HCT116 (cell line): ENCODE measurements at regions of chr12 and their contacts with region 1.

Region 1: GRCh38 chr12:73699318-73699717 is 838.3 kb upstream of the ATXN7L3B start:
- DNase-seq: no peak
- ATAC-seq: no peak
- H3K4me3 ChIP-seq: no peak overlapping the region
- H3K27ac ChIP-seq: no peak overlapping the region
- H3K4me1 ChIP-seq: no peaks in the 10 kb centered on the region
- H3K27me3 ChIP-seq: no peaks in the 10 kb centered on the region
- CTCF ChIP-seq: no peak
- POLR2A ChIP-seq: no peak
- RAD21 ChIP-seq: no peak

Region 2: DNA sequence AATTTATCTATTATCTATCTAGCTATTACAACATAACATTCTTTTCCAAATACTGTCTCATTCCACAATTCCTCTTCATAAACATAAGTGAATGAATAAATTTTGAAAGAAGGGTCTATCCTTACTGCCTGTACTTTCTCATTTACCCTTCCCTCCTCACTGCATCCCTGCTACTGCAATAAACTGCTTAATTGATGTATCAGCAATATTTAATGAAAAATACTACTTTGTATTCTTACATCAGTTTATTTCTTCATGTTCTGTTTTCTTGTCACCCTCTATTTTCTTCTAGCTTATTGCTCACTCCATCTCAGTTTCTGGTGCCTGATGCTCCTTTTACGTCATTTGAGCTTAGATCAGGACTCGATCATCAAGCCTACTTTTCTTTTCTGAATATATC is 142.6 kb after region 1 on chr12:
- CTCF ChIA-PET with region 1: no interaction called
- POLR2A ChIA-PET with region 1: no interaction called
- RAD21 ChIA-PET with region 1: no interaction called
- intact Hi-C with region 1: no loop called
- DNase-seq: no peak
- ATAC-seq: no peak
- H3K4me3 ChIP-seq: no peak overlapping the region
- H3K27ac ChIP-seq: no peak overlapping the region
- H3K4me1 ChIP-seq: no peaks in the 10 kb centered on the region
- H3K27me3 ChIP-seq: no peaks in the 10 kb centered on the region
- CTCF ChIP-seq: no peak
- POLR2A ChIP-seq: no peak
- RAD21 ChIP-seq: no peak

Region 3: DNA sequence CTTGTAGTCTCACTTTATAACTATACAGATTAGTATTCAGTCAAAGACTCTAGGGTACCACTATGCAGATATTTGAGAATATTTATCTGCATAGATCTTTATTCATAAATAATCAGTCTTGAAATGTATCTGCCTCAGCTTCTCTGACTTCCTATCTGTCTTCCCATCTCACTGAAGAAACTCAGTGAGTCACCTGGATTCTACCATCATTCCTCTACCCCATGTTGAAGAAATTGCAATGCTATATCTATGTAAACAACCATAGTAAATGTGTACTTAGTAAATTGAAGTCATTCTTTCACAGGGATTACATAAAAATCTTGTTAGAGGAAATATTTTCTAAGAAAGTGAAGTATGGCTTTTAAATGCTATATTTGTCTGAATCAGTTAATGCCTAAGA is 1126.8 kb after region 1 on chr12:
- CTCF ChIA-PET with region 1: no interaction called
- POLR2A ChIA-PET with region 1: no interaction called
- RAD21 ChIA-PET with region 1: no interaction called
- intact Hi-C with region 1: loop called (anchors 5 kb)
- DNase-seq: no peak
- ATAC-seq: no peak
- H3K4me3 ChIP-seq: no peak overlapping the region
- H3K27ac ChIP-seq: no peak overlapping the region
- H3K4me1 ChIP-seq: no peaks in the 10 kb centered on the region
- H3K27me3 ChIP-seq: no peaks in the 10 kb centered on the region
- CTCF ChIP-seq: no peak
- POLR2A ChIP-seq: no peak
- RAD21 ChIP-seq: no peak